ENCODE measurements at regions of chr6 and their contacts with region 1.

Region 1: DNA sequence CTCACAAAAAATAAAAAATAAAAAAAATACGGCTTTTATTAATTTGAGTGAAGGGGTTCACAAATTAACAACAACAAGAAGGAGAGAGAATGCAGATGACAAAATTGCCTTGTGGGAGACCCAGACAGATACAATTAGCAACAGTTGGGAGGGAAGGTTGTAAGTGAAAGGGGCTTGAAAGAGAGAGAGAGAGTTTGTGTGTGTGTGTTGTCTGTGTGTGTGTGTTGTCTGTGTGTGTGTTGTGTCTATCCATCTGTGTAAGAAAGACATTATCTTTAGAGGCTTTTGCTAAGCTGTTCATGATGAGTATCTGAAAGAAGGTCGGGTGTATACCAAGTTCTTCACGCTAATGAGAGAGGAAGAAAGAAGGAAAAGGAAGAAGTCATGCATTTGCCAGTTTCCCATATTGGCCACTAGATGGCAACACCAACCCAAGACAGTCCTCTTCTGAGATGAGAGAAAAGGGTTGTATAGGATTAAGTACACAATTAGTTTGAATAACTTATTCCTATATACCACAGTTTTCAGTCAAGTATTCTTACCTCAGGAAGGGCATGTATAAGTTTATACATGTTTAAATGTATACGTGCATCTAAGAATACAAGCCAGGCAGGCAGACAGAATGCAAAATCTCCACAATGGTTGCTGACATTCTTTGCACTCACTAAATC is 63.7 kb upstream of the CD2AP start:
- DNase-seq: peak; percentile 50 to 62 (median 59)
- H3K4me3 ChIP-seq: peak overlapping the region; percentile 46 to 73
- H3K4me3 Mint-ChIP-seq: peak overlapping the region; percentile 75 to 91 (median 88)
- H3K27ac ChIP-seq: peak overlapping the region; percentile 1
- H3K27ac Mint-ChIP-seq: peak overlapping the region in 6 of 7 donors; percentile 44 to 89 (median 83)
- H3K4me1 ChIP-seq: peaks cover 21% of the 10 kb centered on the region
- H3K4me1 Mint-ChIP-seq: peaks cover 15 to 18% (median 17%) of the 10 kb centered on the region in 4 donors
- H3K27me3 ChIP-seq: no peaks in the 10 kb centered on the region
- H3K27me3 Mint-ChIP-seq: no peaks in the 10 kb centered on the region

Region 2: GRCh38 chr6:47477497-47478232 is 63.8 kb after region 1 on chr6 and contains the start of gene CD2AP:
- CTCF ChIA-PET with region 1: interaction called, 11 read pairs
- POLR2A ChIA-PET with region 1: interaction called, 39 read pairs
- intact Hi-C with region 1: loop called (anchors 1 kb)
- DNase-seq: peak; percentile 90 to 94 (median 92)
- H3K4me3 ChIP-seq: peak within 1 kb of the TSS; percentile 74 to 88
- H3K4me3 Mint-ChIP-seq: peak within 1 kb of the TSS; percentile 92 to 100 (median 97)
- H3K27ac ChIP-seq: peak within 1 kb of the TSS; percentile 89
- H3K27ac Mint-ChIP-seq: peak within 1 kb of the TSS; percentile 96 to 99 (median 98)
- H3K4me1 ChIP-seq: peaks cover 36% of the 10 kb centered on the region
- H3K4me1 Mint-ChIP-seq: peaks cover 22 to 47% (median 33%) of the 10 kb centered on the region in 4 donors
- H3K27me3 ChIP-seq: no peaks in the 10 kb centered on the region
- H3K27me3 Mint-ChIP-seq: no peaks in the 10 kb centered on the region
- total RNA-seq, gene CD2AP: 25.7 to 25.8 TPM

Region 3: DNA sequence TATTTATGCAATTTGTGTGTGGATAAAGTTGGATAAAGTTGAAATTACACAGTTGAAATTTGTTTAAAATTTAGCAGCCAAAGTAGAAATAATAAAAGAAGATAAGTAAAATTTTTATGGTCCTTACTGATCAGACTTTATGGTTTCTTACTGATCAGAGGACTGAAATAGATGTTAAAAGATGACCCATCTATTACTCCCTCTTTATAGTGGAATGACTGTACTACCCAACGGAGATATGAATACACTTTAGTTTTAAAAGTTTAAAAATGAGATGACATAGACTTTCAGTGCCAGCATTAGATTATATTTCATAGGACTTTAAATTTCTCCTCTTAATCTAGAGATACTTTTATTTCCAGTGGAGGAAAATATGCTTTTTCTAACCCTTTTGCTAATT is 185.6 kb after region 1 on chr6:
- CTCF ChIA-PET with region 1: interaction called, 8 read pairs
- POLR2A ChIA-PET with region 1: no interaction called
- intact Hi-C with region 1: loop called (anchors 1 kb)
- DNase-seq: no peak
- H3K4me3 ChIP-seq: no peak overlapping the region
- H3K4me3 Mint-ChIP-seq: no peak overlapping the region
- H3K27ac ChIP-seq: no peak overlapping the region
- H3K27ac Mint-ChIP-seq: no peak overlapping the region
- H3K4me1 ChIP-seq: no peaks in the 10 kb centered on the region
- H3K4me1 Mint-ChIP-seq: peaks cover 0 to 6% (median 3%) of the 10 kb centered on the region in 4 donors
- H3K27me3 ChIP-seq: no peaks in the 10 kb centered on the region
- H3K27me3 Mint-ChIP-seq: no peaks in the 10 kb centered on the region

Region 4: DNA sequence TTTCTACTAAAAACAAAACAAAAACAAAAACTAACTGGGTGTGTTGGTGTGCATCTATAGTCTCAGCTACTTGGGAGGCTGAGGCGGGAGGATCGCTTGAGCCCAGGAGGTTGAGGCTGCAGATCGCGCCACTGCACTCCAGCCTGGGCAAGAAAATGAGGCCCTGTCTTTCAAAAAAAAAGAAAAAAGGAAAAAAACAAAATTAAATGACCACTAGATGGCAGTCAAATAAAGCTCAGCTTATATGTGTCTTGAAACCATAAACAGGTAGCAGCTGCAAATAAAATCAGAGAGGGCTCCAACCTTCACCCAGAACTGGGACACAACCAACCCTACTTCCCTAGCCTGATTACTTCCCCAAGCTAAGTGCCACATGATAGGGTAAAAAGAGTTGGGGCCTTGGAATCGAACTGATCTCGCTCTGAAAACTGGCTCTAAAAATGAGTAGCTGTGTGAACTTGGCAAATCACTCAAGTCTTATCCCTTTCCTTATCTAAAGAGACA is 217.4 kb after region 1 on chr6:
- CTCF ChIA-PET with region 1: interaction called, 26 read pairs
- POLR2A ChIA-PET with region 1: no interaction called
- intact Hi-C with region 1: loop called (anchors 1 kb)
- DNase-seq: peak; percentile 19 to 58 (median 50)
- H3K4me3 ChIP-seq: no peak overlapping the region
- H3K4me3 Mint-ChIP-seq: no peak overlapping the region
- H3K27ac ChIP-seq: no peak overlapping the region
- H3K27ac Mint-ChIP-seq: peak overlapping the region in 4 of 7 donors; percentile 25 to 58 (median 44)
- H3K4me1 ChIP-seq: peaks cover 12% of the 10 kb centered on the region
- H3K4me1 Mint-ChIP-seq: peaks cover 7 to 12% (median 10%) of the 10 kb centered on the region in 4 donors
- H3K27me3 ChIP-seq: no peaks in the 10 kb centered on the region
- H3K27me3 Mint-ChIP-seq: no peaks in the 10 kb centered on the region

Region 5: GRCh38 chr6:47733879-47734558 is 320.1 kb after region 1 on chr6:
- CTCF ChIA-PET with region 1: interaction called, 16 read pairs
- POLR2A ChIA-PET with region 1: no interaction called
- intact Hi-C with region 1: loop called (anchors 1 kb)
- DNase-seq: peak in 3 of 5 donors; percentile 5 to 8 (median 7)
- H3K4me3 ChIP-seq: no peak overlapping the region
- H3K4me3 Mint-ChIP-seq: no peak overlapping the region
- H3K27ac ChIP-seq: no peak overlapping the region
- H3K27ac Mint-ChIP-seq: no peak overlapping the region
- H3K4me1 ChIP-seq: no peaks in the 10 kb centered on the region
- H3K4me1 Mint-ChIP-seq: peaks cover 0 to 2% (median 0%) of the 10 kb centered on the region in 4 donors
- H3K27me3 ChIP-seq: no peaks in the 10 kb centered on the region
- H3K27me3 Mint-ChIP-seq: peaks cover 1 to 4% of the 10 kb centered on the region in 2 donors

Region 6: DNA sequence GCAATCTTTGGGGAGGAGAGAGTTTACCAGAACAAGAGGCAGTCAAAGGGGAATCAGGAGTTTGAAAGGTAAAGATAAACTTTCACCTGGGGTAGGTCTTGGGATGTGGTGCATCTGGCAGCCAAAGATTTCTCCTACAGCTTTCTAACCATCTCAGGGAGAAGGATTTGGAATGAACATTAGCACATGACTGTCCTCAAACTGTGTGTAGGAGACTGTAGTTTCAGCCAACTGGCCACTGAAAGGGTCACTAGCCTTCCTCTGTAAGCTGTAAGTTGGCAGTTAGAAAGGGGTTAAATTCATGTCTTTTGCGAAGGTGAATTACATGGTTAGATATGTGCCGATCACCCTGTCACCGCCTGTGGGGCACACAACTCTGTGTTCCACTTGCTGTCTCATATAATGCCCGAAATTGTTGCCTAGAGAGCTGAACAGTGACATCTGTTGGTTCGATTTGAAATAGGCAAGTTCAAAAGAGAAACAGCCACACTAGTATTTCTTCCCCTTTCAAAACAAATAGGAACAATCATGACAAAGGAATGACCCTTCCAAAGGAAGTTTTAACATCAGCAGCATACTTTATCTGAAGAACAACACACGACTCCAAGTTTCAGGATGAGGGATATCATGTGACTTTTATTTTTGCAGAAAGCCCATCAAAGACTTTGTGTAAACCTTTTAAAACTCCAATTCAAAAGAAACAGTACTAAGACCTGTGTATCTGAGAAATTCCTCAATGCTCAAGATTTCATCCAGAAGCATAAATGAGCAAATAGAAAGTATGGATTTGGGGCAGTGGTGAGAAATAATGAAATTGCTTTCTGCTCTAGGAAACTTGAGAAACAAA is 366.8 kb after region 1 on chr6:
- CTCF ChIA-PET with region 1: interaction called, 79 read pairs
- POLR2A ChIA-PET with region 1: interaction called, 6 read pairs
- intact Hi-C with region 1: loop called (anchors 1 kb)
- DNase-seq: peak in 4 of 5 donors; percentile 42 to 47 (median 43)
- H3K4me3 ChIP-seq: no peak overlapping the region
- H3K4me3 Mint-ChIP-seq: peak overlapping the region in 2 of 8 donors; percentile 38 to 53
- H3K27ac ChIP-seq: no peak overlapping the region
- H3K27ac Mint-ChIP-seq: peak overlapping the region in 2 of 7 donors; percentile 33 to 60
- H3K4me1 ChIP-seq: peaks cover 4% of the 10 kb centered on the region
- H3K4me1 Mint-ChIP-seq: peaks cover 6 to 8% (median 6%) of the 10 kb centered on the region in 4 donors
- H3K27me3 ChIP-seq: no peaks in the 10 kb centered on the region
- H3K27me3 Mint-ChIP-seq: peaks cover 0 to 7% of the 10 kb centered on the region in 2 donors

Region 7: DNA sequence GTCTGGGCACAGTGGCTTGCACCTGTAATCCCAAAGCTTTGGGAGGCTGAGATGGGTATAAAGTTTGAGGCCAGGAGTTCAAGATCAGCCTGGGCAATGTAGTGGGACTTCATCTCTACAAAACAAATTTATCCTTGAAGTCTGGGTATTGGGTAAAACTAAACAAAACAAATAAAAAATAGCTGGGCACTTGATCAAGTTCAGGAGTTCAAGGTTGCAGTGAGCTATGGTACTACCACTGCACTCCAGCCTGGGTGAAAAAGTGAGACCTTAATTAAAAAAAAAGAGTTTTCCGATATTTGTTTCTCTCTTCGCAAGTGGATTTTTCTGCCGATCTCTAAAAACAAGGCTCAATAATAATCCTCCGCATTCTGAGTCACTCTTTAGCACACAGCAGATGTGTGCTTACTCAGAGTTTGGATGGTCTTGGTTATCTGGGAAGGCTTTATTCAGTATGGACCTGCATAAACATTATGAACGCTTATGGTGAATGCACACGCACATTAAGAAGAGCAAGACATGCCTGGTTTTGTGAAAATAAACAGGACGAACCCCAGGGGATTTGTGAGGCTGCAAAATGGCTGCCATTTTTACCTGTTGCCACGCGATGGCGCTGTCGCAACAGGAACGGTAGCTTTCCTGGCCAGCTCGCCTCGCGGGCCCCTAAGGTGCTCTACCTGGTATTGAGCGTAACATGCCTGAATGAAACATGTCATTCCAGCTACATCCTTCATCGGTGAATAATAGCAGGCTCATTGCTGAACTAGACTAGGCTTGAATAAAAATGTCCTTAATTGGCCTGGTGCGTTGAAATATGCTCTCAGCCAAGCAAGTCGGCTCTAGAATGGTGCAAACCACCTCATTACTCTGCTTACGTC is 374.0 kb after region 1 on chr6:
- CTCF ChIA-PET with region 1: interaction called, 79 read pairs
- POLR2A ChIA-PET with region 1: no interaction called
- intact Hi-C with region 1: loop called (anchors 2 kb)
- DNase-seq: peak; percentile 39 to 49 (median 46)
- H3K4me3 ChIP-seq: no peak overlapping the region
- H3K4me3 Mint-ChIP-seq: peak overlapping the region in 4 of 8 donors; percentile 13 to 41 (median 27)
- H3K27ac ChIP-seq: no peak overlapping the region
- H3K27ac Mint-ChIP-seq: peak overlapping the region in 1 of 7 donors; percentile 11
- H3K4me1 ChIP-seq: peaks cover 6% of the 10 kb centered on the region
- H3K4me1 Mint-ChIP-seq: peaks cover 3 to 13% (median 6%) of the 10 kb centered on the region in 4 donors
- H3K27me3 ChIP-seq: no peaks in the 10 kb centered on the region
- H3K27me3 Mint-ChIP-seq: peaks cover 12 to 14% of the 10 kb centered on the region in 2 donors

Region 8: GRCh38 chr6:49401063-49401462 is 1987.2 kb after region 1 on chr6:
- CTCF ChIA-PET with region 1: no interaction called
- POLR2A ChIA-PET with region 1: no interaction called
- intact Hi-C with region 1: no loop called
- DNase-seq: no peak
- H3K4me3 ChIP-seq: no peak overlapping the region
- H3K4me3 Mint-ChIP-seq: no peak overlapping the region
- H3K27ac ChIP-seq: no peak overlapping the region
- H3K27ac Mint-ChIP-seq: no peak overlapping the region
- H3K4me1 ChIP-seq: no peaks in the 10 kb centered on the region
- H3K4me1 Mint-ChIP-seq: no peaks in the 10 kb centered on the region
- H3K27me3 ChIP-seq: no peaks in the 10 kb centered on the region
- H3K27me3 Mint-ChIP-seq: peaks cover 5% of the 10 kb centered on the region in 2 donors